CD4-positive, alpha-beta T cell (primary cell): ENCODE measurements at regions of chr2 and their contacts with region 1.

Region 1: GRCh38 chr2:264660-265468 is at the start of gene ACP1:
- DNase-seq: peak; percentile 86 to 99 (median 94)
- ATAC-seq: peak; percentile 82
- H3K4me3 ChIP-seq: peak within 1 kb of the TSS; percentile 91
- H3K4me3 Mint-ChIP-seq: peak within 1 kb of the TSS; percentile 95
- H3K27ac ChIP-seq: peak within 1 kb of the TSS; percentile 81 to 87
- H3K27ac Mint-ChIP-seq: peak within 1 kb of the TSS; percentile 99
- H3K4me1 ChIP-seq: peaks cover 37% of the 10 kb centered on the region
- H3K4me1 Mint-ChIP-seq: peaks cover 64% of the 10 kb centered on the region
- H3K27me3 ChIP-seq: no peaks in the 10 kb centered on the region
- H3K27me3 Mint-ChIP-seq: no peaks in the 10 kb centered on the region
- CTCF ChIP-seq: no peak
- total RNA-seq, gene ACP1: 89.7 to 93.2 TPM

Region 2: DNA sequence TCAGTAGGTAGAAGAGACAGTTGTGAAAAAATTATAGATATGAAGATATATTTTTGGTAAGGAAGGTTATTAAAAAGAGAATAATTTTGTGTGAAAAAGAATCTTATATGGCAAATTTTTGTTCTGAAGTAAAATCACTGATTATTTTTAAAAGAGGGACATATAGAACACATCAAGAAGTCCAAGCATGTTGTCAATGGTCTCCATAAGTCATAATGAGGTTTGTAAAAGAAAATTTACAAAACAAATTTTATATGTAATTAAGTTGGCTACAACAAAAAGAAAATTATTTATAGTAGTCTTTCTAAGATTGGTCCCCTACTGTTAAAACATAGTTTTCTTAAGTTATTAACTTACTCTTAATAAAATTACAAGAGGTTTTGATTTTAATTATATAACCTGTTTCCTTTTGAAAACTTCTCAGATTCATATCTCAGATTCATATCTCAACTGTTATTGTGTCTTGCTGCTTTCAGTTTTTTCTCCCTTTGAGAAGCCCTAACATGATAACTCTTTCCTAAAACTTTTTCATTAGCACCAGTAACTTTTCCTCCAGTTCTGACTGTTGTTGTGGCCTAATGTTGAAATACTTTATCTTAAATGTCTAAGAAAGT is 82.2 kb before region 1 on chr2:
- CTCF ChIA-PET with region 1: no interaction called
- POLR2A ChIA-PET with region 1: interaction called, 6 read pairs
- intact Hi-C with region 1: loop called in 1 of 2 experiments (anchors 5 kb)
- DNase-seq: no peak
- ATAC-seq: no peak
- H3K4me3 ChIP-seq: no peak overlapping the region
- H3K4me3 Mint-ChIP-seq: no peak overlapping the region
- H3K27ac ChIP-seq: no peak overlapping the region
- H3K27ac Mint-ChIP-seq: peak overlapping the region; percentile 74
- H3K4me1 ChIP-seq: peaks cover 10% of the 10 kb centered on the region
- H3K4me1 Mint-ChIP-seq: peaks cover 45% of the 10 kb centered on the region
- H3K27me3 ChIP-seq: no peaks in the 10 kb centered on the region
- H3K27me3 Mint-ChIP-seq: no peaks in the 10 kb centered on the region
- CTCF ChIP-seq: no peak

Region 3: DNA sequence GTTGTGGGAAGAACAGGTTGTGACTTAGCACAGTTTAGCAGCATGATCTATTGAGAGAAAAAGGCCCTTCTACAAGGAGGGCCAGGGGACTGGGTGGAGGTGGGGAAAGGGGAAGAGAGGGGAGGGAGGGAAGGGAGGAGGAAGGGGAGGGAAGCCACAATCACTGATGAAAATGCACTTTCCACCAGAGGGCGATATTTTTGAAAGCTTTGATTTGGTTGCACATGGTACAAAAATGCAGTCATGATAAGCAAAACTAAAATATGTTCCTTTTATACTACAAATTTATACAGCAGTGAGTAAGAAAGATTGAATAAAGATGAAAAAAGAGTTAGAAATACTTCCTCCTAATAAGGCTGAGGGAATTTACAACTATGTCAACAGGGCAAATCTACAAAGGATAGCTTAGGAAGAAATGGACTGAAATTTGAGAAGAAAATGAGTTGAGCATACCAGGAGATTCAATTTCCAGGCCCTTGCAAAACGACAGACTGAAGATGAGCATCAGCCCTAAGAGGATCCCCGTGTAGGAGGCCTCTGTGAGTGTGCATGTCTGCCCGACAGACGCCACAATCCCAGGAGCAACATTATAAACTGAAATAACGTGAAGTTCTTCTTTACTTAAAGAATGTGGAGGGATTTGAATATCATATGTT is 18.2 kb before region 1 on chr2:
- CTCF ChIA-PET with region 1: interaction called, 4 read pairs
- POLR2A ChIA-PET with region 1: interaction called, 3 read pairs
- intact Hi-C with region 1: loop called in 1 of 2 experiments (anchors 2 kb)
- DNase-seq: peak in 9 of 14 experiments; percentile 5 to 75 (median 14)
- ATAC-seq: peak; percentile 60
- H3K4me3 ChIP-seq: no peak overlapping the region
- H3K4me3 Mint-ChIP-seq: no peak overlapping the region
- H3K27ac ChIP-seq: no peak overlapping the region
- H3K27ac Mint-ChIP-seq: no peak overlapping the region
- H3K4me1 ChIP-seq: no peaks in the 10 kb centered on the region
- H3K4me1 Mint-ChIP-seq: peaks cover 7% of the 10 kb centered on the region
- H3K27me3 ChIP-seq: no peaks in the 10 kb centered on the region
- H3K27me3 Mint-ChIP-seq: no peaks in the 10 kb centered on the region
- CTCF ChIP-seq: peak; percentile 79

Region 4: DNA sequence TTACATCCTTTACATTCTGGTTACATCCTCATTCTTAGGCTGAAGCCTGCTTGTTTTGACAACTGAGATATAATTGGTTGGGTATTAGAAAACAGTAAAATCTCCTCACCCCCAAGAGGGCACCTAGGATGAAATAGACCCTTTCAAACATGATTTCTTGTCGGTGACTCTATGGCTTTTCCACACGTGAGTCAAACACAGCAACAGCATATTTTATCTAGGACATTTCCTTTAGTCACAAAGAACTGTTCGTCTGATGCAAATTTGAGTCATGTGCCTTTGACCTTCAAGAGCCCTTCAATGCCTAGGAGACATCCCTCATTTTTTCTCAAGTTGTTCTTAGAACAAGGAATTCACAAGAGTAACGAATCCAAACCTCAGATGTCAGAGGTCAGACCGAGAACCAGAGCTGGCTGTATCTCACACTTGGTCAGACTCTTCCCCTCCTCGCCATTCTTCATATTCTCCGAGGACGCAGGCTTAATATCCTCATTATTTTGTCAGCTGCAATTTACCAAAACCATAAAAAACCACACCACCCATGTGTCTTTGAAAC is 83.6 kb after region 1 on chr2:
- CTCF ChIA-PET with region 1: no interaction called
- POLR2A ChIA-PET with region 1: no interaction called
- intact Hi-C with region 1: no loop called
- DNase-seq: no peak
- ATAC-seq: no peak
- H3K4me3 ChIP-seq: no peak overlapping the region
- H3K4me3 Mint-ChIP-seq: no peak overlapping the region
- H3K27ac ChIP-seq: no peak overlapping the region
- H3K27ac Mint-ChIP-seq: no peak overlapping the region
- H3K4me1 ChIP-seq: no peaks in the 10 kb centered on the region
- H3K4me1 Mint-ChIP-seq: no peaks in the 10 kb centered on the region
- H3K27me3 ChIP-seq: peaks cover 3 to 11% of the 10 kb centered on the region in 2 experiments
- H3K27me3 Mint-ChIP-seq: peaks cover 26% of the 10 kb centered on the region
- CTCF ChIP-seq: no peak

Region 5: DNA sequence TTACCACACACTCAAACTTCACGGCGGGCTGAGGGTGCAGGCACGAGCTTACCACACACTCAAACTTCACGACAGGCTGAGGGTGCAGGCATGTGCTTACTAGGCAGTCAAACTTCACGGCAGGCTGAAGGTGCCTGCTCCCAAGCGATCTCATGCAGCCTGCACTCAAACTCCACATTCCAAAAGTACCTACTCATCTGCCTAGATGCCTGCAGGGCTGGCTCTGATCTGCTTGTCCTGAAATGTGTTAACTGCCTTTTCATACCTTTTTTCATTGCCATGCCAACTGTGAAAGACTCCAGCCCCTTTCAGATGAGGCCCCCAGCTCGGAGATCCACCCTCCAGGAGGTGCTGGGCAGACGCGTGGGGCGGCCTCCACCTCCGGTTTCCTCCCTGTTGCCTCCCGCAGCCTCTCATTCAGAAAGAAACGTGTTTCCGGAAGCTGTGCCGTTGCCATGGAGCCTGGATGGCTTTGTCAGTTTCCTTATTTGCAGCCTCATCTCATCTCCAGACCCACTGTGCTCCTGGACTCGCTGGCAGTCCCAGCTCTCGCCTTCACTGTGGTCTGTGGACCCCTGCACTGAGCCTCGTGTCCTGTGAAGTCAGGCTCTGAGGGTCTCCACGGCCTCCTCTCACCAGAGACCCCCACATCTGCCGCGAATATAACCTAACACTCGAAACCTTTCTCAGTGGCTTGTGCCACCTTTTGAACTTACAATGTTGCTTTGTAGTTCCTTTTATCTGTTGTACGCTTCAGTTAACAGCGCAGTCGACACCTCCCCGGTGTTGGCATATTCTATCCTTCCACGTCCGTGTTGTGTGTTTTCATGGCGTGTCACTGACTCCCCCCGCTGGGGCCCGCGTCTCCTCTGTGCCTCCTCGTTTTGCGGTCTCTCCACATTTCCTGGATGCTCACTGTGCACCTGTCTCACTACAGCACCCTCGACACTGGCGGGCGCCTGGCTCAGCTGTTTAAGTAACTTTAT is 129.1 kb after region 1 on chr2:
- CTCF ChIA-PET with region 1: no interaction called
- POLR2A ChIA-PET with region 1: no interaction called
- intact Hi-C with region 1: loop called in 1 of 2 experiments (anchors 10 kb)
- DNase-seq: peak; percentile 39 to 82 (median 58)
- ATAC-seq: peak; percentile 84
- H3K4me3 ChIP-seq: peak overlapping the region; percentile 52
- H3K4me3 Mint-ChIP-seq: peak overlapping the region; percentile 84
- H3K27ac ChIP-seq: peak overlapping the region; percentile 62 to 75
- H3K27ac Mint-ChIP-seq: peak overlapping the region; percentile 93
- H3K4me1 ChIP-seq: peaks cover 24% of the 10 kb centered on the region
- H3K4me1 Mint-ChIP-seq: peaks cover 11% of the 10 kb centered on the region
- H3K27me3 ChIP-seq: no peaks in the 10 kb centered on the region
- H3K27me3 Mint-ChIP-seq: no peaks in the 10 kb centered on the region
- CTCF ChIP-seq: no peak

Region 6: DNA sequence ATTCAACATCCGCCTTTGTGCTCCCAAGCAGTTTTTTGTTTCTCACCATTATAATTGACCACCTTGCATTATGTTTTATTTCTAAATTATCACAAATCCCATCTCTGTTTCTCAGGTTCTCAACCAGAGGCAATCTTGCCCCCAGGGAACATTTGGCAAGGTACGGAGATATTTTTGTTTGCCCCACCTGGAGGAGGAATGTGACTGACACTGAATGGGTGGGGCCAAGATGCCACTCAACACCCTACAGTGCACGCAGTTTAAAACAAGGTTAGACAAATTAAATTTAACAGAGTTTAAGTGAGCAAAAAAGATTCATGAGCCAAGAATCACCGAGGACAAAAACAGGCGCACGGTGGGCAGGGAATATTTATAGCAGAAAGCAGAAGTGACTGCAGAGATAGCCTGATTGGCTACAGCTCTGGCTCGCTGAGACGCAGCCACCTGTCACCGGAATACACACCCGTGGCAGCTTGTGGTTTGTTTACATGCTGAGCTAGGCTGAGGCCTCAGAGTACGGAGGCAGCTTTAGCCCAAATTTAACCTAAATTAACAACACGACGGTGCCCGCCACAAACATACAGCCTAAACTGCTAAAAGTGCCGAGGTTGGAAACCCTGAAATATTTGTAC is 173.0 kb after region 1 on chr2:
- CTCF ChIA-PET with region 1: no interaction called
- POLR2A ChIA-PET with region 1: no interaction called
- intact Hi-C with region 1: loop called in 1 of 2 experiments (anchors 5 kb)
- DNase-seq: peak; percentile 49 to 91 (median 65)
- ATAC-seq: peak; percentile 100
- H3K4me3 ChIP-seq: peak overlapping the region; percentile 47
- H3K4me3 Mint-ChIP-seq: peak overlapping the region; percentile 85
- H3K27ac ChIP-seq: peak overlapping the region; percentile 64
- H3K27ac Mint-ChIP-seq: peak overlapping the region; percentile 94
- H3K4me1 ChIP-seq: peaks cover 24% of the 10 kb centered on the region
- H3K4me1 Mint-ChIP-seq: peaks cover 22% of the 10 kb centered on the region
- H3K27me3 ChIP-seq: no peaks in the 10 kb centered on the region
- H3K27me3 Mint-ChIP-seq: no peaks in the 10 kb centered on the region
- CTCF ChIP-seq: no peak

Region 7: GRCh38 chr2:677056-677965 is 412.4 kb after region 1 on chr2 and contains the start of gene TMEM18:
- CTCF ChIA-PET with region 1: no interaction called
- POLR2A ChIA-PET with region 1: no interaction called
- intact Hi-C with region 1: loop called (anchors 1 to 5 kb)
- DNase-seq: peak; percentile 81 to 99 (median 97)
- ATAC-seq: peak; percentile 75
- H3K4me3 ChIP-seq: peak within 1 kb of the TSS; percentile 98
- H3K4me3 Mint-ChIP-seq: peak within 1 kb of the TSS; percentile 98
- H3K27ac ChIP-seq: peak within 1 kb of the TSS; percentile 98 to 99
- H3K27ac Mint-ChIP-seq: peak within 1 kb of the TSS; percentile 99
- H3K4me1 ChIP-seq: peaks cover 26% of the 10 kb centered on the region
- H3K4me1 Mint-ChIP-seq: peaks cover 45% of the 10 kb centered on the region
- H3K27me3 ChIP-seq: no peaks in the 10 kb centered on the region
- H3K27me3 Mint-ChIP-seq: no peaks in the 10 kb centered on the region
- CTCF ChIP-seq: peak; percentile 40
- total RNA-seq, gene TMEM18: 25.6 to 26.3 TPM